ENCODE measurements at regions of chr7 and their contacts with region 1.

Region 1: DNA sequence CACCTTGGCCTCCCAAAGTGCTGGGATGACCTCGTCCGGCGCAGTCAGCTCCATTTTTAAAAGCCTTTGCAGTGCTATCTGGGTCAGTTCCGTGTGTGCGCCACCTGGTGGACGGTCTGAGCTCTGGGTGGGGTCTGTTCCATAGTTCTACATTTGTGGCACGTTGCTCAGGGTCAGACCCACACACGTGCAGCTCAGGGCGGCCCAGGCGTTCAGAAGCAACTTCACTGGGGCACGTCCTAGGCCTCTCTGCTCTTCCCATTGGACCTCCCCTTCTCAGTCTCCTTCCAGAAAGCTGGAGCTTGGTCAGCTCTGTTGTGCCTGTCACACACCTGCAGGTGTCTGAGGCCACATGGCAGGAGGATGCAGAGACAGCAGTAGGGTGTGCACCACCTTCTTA is 137.9 kb downstream of the DNAJB6 start:
- DNase-seq: peak; percentile 84
- ATAC-seq: peak; percentile 96
- H3K4me3 Mint-ChIP-seq: no peak overlapping the region
- H3K27ac Mint-ChIP-seq: no peak overlapping the region
- H3K4me1 Mint-ChIP-seq: no peaks in the 10 kb centered on the region
- H3K27me3 Mint-ChIP-seq: peaks cover 30% of the 10 kb centered on the region
- CTCF ChIP-seq: peak; percentile 52

Region 2: DNA sequence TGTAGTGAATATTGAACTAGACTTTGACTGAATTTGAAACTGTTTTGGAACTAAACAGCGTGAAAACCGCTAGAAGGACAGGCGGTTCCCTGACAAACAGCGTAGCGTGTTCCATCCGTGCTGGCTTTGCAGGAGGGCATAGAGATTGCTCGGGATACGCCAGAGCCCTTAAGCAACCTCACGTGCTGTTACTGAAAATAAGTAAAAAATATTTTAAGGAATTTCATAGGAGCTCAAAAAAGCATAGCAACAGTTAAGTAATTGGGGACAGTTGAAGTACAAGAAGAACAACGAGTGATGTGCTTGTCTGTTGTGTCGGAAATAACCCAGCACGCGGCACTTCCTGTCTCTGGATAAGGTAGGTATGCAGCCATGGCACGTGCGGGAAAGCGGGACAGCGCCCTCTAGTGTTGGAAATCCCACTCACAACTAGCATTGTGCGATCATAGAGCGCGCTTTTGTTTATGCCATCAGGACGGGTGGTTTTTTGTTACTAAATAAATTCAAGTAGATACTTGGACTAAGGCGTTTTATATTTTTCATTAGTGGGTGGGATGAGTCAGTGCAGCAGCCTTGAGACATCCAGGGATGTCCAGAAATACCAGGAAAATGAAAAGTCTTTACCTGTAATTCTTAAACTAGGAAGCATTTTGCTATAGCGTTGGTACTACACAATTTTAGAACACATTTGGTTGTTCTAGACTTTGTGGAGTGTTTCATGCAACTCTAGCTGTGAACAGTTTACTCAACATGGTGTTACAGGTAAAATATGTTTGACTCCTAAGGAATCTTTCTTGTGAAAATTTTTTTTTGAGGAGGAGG is 87.5 kb before region 1 on chr7:
- CTCF ChIA-PET with region 1: no interaction called
- POLR2A ChIA-PET with region 1: no interaction called
- DNase-seq: peak; percentile 89
- ATAC-seq: peak; percentile 84
- H3K4me3 Mint-ChIP-seq: no peak overlapping the region
- H3K27ac Mint-ChIP-seq: peak overlapping the region; percentile 88
- H3K4me1 Mint-ChIP-seq: peaks cover 60% of the 10 kb centered on the region
- H3K27me3 Mint-ChIP-seq: no peaks in the 10 kb centered on the region
- CTCF ChIP-seq: peak; percentile 97

Region 3: GRCh38 chr7:157432957-157433576 is 41.6 kb before region 1 on chr7:
- CTCF ChIA-PET with region 1: interaction called, 29 read pairs
- POLR2A ChIA-PET with region 1: no interaction called
- DNase-seq: peak; percentile 60
- ATAC-seq: peak; percentile 28
- H3K4me3 Mint-ChIP-seq: peak overlapping the region; percentile 59
- H3K27ac Mint-ChIP-seq: no peak overlapping the region
- H3K4me1 Mint-ChIP-seq: peaks cover 6% of the 10 kb centered on the region
- H3K27me3 Mint-ChIP-seq: no peaks in the 10 kb centered on the region; the same call in none of the 2 replicates
- CTCF ChIP-seq: peak; percentile 75

Region 4: GRCh38 chr7:157464111-157464970 is 10.3 kb before region 1 on chr7:
- CTCF ChIA-PET with region 1: interaction called, 26 read pairs
- POLR2A ChIA-PET with region 1: no interaction called
- DNase-seq: no peak
- ATAC-seq: no peak; the same call in 1 of the 2 replicates
- H3K4me3 Mint-ChIP-seq: peak overlapping the region; percentile 29
- H3K27ac Mint-ChIP-seq: peak overlapping the region; percentile 29; the same call in 1 of the 2 replicates
- H3K4me1 Mint-ChIP-seq: peaks cover 13% of the 10 kb centered on the region
- H3K27me3 Mint-ChIP-seq: peaks cover 20% of the 10 kb centered on the region
- CTCF ChIP-seq: no peak

Region 5: DNA sequence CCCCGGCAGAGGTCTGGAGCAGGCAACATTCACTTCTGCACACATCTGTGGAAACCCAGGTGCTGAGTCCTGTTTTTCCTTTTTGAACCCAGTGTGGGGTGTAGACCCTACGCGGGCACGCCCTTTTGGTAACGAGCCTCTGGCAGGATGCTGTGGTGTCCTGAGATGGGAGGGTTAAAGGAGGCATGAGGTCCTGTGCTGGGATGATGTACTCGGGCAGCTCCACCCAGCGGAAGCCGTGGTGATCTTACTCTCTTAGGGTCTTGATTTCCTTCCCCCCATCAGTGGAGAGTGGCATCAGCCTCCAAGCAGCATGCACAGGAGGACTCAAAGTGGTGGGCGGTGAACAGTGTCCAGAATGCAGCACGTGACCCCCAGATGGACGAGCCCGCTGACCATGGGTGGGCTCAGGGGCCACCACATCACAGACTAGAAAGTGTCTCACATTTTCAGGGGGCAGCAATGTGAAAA is 10.7 kb after region 1 on chr7:
- CTCF ChIA-PET with region 1: interaction called, 22 read pairs
- POLR2A ChIA-PET with region 1: no interaction called
- DNase-seq: no peak
- ATAC-seq: no peak
- H3K4me3 Mint-ChIP-seq: no peak overlapping the region
- H3K27ac Mint-ChIP-seq: no peak overlapping the region
- H3K4me1 Mint-ChIP-seq: no peaks in the 10 kb centered on the region
- H3K27me3 Mint-ChIP-seq: peaks cover 4% of the 10 kb centered on the region; the same call in 1 of the 2 replicates
- CTCF ChIP-seq: no peak

Region 6: DNA sequence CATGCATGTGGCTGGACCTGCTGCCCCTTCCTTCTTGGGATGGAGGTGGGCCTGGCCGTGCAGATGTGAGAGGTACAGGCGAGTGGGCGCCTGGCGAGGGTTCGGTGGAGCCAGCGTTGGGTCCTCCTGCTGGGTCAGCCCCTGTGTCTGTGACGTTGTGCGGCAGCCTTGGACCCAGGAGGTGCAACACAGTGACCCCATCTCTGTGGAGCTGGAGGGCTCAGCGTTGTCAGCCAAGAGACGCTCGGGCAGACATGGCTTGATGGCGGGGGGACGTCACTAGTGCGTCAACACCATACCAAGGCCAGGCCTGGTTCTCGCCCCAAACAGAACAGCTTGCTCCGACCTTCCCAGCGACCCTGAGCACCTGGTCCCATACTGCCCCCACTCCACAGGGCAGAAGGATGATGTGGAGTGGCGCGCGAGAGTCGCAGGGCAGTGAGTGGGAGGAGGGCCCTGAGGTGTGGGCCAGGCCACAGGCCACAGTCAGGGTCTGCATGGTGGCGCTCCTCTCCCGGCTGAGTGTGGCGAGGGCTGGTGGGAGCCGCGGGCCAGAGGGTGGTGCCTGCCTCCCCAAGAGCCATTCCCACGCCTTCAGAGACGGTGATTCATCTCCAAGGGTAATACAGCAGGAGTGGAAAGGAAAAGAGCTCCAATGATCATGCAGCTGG is 46.5 kb after region 1 on chr7:
- CTCF ChIA-PET with region 1: interaction called, 18 read pairs
- POLR2A ChIA-PET with region 1: no interaction called
- DNase-seq: peak; percentile 8
- ATAC-seq: no peak
- H3K4me3 Mint-ChIP-seq: no peak overlapping the region
- H3K27ac Mint-ChIP-seq: no peak overlapping the region
- H3K4me1 Mint-ChIP-seq: no peaks in the 10 kb centered on the region
- H3K27me3 Mint-ChIP-seq: peaks cover 15% of the 10 kb centered on the region
- CTCF ChIP-seq: no peak

Region 7: GRCh38 chr7:157633465-157634185 is 158.9 kb after region 1 on chr7:
- CTCF ChIA-PET with region 1: no interaction called
- POLR2A ChIA-PET with region 1: no interaction called
- DNase-seq: no peak
- ATAC-seq: no peak
- H3K4me3 Mint-ChIP-seq: no peak overlapping the region
- H3K27ac Mint-ChIP-seq: no peak overlapping the region
- H3K4me1 Mint-ChIP-seq: no peaks in the 10 kb centered on the region
- H3K27me3 Mint-ChIP-seq: peaks cover 9% of the 10 kb centered on the region
- CTCF ChIP-seq: no peak